Activated CD8-positive, alpha-beta T cell treated with anti-CD3 and anti-CD28 coated beads, Interleukin-2, amount 10 ng/mL, durations not matched to agents 7 days and 5 days (primary cell): ENCODE measurements at regions of chr9 and their contacts with region 1.

Region 1: DNA sequence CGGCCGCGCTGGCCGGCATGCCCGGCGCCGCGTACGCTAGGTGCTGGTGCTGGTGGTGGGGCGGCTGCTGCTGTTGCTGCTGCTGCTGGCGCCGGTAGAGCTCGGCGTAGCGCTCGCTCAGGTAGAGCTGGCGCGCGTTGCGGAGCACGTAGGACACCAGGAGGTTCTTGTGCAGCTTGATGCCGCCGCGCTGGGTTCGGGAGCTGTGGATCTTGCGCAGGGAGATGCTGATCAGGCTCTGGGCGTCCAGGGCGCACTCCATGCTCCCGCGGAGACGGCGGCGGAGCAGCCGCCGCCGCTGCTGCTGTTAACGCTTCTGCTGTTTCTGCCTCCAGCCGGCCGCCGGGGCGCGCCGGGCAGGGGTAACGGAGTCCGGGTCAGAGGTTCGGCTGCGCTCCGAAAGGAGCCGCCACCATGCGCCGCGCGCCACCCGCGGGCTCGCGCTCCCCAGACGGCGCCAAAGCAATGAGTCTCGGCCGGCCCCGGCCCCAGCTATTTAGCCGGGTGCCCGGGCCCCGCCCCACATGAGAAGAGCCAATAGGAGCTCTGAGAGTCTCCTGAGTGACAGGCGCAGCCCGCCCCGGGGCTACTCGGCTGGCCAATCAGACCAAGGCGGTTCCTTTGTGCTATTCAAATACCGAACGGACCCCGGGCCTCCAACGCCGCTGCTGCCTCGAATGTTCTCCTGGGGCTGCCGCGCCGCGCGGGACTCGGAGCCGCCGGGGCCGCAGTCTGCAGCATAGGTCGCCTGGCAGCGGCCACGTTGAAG is at the start of gene IER5L:
- DNase-seq: peak; percentile 95
- ATAC-seq: peak; percentile 83
- H3K4me3 Mint-ChIP-seq: peak within 1 kb of the TSS; percentile 92
- H3K27ac Mint-ChIP-seq: peak within 1 kb of the TSS; percentile 80
- H3K4me1 Mint-ChIP-seq: peaks cover 17% of the 10 kb centered on the region
- H3K27me3 Mint-ChIP-seq: peaks cover 6% of the 10 kb centered on the region
- total RNA-seq, gene IER5L: 6.0 to 6.1 TPM

Region 2: GRCh38 chr9:129131300-129132145 is 46.5 kb before region 1 on chr9:
- CTCF ChIA-PET with region 1: interaction called, 43 read pairs
- POLR2A ChIA-PET with region 1: interaction called, 5 read pairs
- DNase-seq: peak; percentile 89
- ATAC-seq: peak; percentile 97
- H3K4me3 Mint-ChIP-seq: no peak overlapping the region
- H3K27ac Mint-ChIP-seq: no peak overlapping the region
- H3K4me1 Mint-ChIP-seq: peaks cover 7% of the 10 kb centered on the region
- H3K27me3 Mint-ChIP-seq: no peaks in the 10 kb centered on the region

Region 3: DNA sequence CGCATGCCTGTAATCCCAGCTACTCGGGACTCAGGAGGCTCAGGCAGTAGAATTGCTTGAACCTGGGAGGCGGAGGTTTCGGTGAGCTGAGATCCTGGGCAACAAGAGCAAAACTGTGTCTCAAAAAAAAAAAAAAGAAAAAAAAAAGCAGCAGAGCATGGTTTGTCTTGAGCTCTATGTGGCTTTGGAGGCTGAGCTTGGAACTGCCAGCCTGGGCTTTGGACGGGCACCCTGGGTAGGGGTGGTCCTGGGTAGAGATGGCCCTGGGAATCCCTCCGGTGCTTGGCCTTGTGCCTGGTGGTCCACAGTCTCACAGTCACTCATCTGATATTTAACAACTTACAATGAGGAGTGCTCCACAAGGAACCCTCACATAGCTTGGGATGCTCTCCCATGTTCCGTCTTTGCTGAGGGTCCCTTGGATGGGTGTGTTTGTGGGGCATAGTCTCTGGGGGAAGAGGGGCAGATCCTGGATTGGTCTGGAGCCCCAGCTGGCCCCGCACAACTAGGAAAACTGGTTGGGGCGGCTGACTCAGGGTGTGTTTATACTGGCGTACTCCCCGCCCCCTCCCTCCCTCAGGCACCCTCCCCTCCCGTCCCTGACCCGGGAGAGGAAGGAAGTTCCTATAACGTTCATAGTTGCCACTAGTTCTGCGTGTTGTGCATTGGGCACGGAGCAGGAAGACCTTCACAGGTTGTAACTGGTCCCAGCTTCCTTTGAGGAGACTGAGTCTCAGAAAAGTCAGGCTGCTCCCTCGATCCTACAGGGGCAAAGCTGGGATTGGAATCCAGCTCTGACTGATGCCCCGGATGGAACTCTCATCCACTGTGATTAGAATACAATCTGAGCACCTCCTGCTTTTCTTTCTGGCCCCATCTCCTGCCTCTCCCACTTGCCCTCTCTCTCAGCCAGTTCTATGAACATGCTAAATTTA is 11.1 kb before region 1 on chr9:
- CTCF ChIA-PET with region 1: interaction called, 18 read pairs
- POLR2A ChIA-PET with region 1: interaction called, 9 read pairs
- DNase-seq: peak; percentile 35
- ATAC-seq: peak; percentile 55
- H3K4me3 Mint-ChIP-seq: peak overlapping the region; percentile 56
- H3K27ac Mint-ChIP-seq: peak overlapping the region; percentile 55
- H3K4me1 Mint-ChIP-seq: peaks cover 39% of the 10 kb centered on the region
- H3K27me3 Mint-ChIP-seq: peaks cover 1% of the 10 kb centered on the region

Region 4: GRCh38 chr9:129347316-129348120 is 169.5 kb after region 1 on chr9:
- CTCF ChIA-PET with region 1: interaction called, 20 read pairs
- POLR2A ChIA-PET with region 1: no interaction called
- DNase-seq: no peak
- ATAC-seq: no peak
- H3K4me3 Mint-ChIP-seq: no peak overlapping the region
- H3K27ac Mint-ChIP-seq: no peak overlapping the region
- H3K4me1 Mint-ChIP-seq: peaks cover 16% of the 10 kb centered on the region
- H3K27me3 Mint-ChIP-seq: peaks cover 7% of the 10 kb centered on the region

Region 5: DNA sequence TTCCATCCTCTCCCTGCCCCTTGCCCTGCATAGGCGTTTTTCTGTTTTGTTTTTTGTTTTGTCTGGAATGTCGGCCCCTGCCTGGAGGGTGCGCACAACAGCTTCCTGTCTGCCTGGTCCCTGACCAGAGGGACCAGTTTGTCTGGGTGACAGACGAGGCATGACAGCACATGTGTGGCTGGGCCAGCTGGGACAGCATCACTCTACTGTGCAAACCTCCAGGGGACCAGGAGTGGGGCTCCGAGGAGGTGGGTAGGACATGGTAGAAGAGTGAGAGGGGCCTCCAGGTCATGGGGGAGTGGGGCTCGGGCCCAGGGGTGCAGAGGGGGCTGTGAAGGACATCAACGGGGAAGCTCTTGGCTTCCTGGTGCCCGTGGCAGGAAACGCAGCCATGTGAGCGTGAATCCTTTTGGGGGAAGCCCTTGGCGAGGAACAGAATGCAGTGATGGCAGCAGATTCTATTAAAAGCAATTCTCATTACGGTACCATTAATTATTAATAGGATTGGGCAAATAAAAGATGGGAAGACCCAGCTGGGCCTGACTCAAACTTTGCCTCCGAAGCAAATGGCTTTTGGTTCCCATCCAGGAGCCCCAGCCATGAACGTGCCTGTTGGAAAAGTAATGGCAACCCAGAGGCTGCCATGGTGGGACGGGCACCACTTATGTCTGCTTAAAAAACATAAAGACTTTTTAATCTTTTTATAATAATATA is 184.5 kb after region 1 on chr9:
- CTCF ChIA-PET with region 1: no interaction called
- POLR2A ChIA-PET with region 1: no interaction called
- DNase-seq: no peak
- ATAC-seq: no peak
- H3K4me3 Mint-ChIP-seq: no peak overlapping the region
- H3K27ac Mint-ChIP-seq: no peak overlapping the region
- H3K4me1 Mint-ChIP-seq: no peaks in the 10 kb centered on the region
- H3K27me3 Mint-ChIP-seq: peaks cover 3% of the 10 kb centered on the region

Region 6: DNA sequence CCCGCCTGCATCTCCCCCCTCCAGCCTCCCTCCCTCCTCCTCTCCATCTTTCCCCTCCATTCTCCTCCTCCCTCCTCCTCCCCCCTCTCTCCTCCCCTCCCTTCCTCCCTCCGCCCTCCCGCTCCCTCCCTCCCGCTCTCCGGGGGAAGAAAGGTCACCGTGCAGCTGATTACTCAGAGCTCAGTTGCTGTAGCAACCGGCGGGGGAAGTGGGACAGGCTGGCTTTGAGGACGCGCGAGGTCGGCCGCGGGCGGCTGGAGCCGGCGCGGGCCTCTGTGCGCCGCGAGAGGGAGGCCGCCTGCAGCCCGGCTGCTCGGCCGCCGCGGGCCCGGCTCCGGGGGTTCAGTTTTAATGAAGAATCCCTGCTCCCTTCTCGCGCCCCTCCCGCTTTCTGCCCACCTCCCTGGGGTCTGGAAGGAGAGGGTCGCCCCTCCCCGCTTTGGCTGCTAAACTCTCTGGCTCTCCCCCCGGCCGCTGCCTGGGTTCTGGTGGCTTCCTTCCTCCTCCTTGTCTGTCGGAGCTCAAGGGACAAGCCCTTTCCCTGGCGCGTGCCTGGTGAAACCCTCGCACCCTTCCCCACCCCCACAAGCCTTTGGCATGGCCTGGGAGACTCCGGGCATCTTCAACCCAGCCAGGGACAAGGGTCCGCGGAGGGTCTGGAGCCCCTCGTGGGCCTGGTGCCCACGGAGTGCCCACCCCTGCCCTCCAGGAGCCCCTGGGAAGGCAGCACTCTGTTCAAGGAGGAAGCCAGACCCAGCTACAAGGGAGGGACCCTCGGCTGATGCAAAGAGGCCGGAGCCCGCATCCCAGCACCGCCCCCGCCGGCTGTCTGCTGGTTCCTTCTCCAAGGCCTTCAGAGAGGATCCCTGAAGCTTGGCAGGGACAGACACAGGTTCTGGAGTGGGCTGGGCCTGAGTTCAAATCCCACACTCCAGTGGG is 282.6 kb after region 1 on chr9:
- CTCF ChIA-PET with region 1: interaction called, 22 read pairs
- POLR2A ChIA-PET with region 1: interaction called, 11 read pairs
- DNase-seq: peak; percentile 94
- ATAC-seq: peak; percentile 82
- H3K4me3 Mint-ChIP-seq: peak overlapping the region; percentile 68
- H3K27ac Mint-ChIP-seq: peak overlapping the region; percentile 88
- H3K4me1 Mint-ChIP-seq: peaks cover 40% of the 10 kb centered on the region
- H3K27me3 Mint-ChIP-seq: peaks cover 14% of the 10 kb centered on the region

Region 7: DNA sequence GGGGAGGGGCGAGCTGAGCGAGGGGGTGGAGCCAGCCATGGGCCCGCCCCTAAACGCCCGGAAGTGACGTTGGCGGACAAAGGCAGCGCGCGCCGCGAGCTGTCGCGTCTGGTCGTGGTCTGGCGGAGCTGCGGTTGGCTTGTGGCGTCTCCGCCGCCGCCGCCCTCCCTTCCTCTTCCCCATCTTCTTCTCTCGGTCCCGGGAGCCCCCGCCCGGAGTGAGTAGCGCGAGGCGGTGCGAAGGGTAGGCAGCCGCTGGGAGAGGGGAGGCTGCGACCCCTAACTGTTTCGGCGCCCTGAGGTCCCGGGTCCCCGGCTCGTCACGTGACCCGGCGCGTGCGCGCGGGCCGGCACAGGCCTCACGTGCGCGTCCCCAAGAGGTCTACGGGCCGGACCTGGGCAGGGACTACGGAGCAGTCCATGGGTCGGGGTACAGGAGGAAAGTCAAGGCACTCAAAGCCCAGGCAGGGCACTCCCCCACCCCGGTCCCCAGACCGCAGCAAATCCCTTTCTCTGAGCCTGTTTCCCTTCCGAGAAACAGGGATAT is 448.2 kb after region 1 on chr9 and contains the start of gene NTMT1:
- CTCF ChIA-PET with region 1: interaction called, 39 read pairs
- POLR2A ChIA-PET with region 1: interaction called, 8 read pairs
- DNase-seq: peak; percentile 92
- ATAC-seq: peak; percentile 70
- H3K4me3 Mint-ChIP-seq: peak within 1 kb of the TSS; percentile 80
- H3K27ac Mint-ChIP-seq: peak within 1 kb of the TSS; percentile 88
- H3K4me1 Mint-ChIP-seq: peaks cover 54% of the 10 kb centered on the region
- H3K27me3 Mint-ChIP-seq: peaks cover 5% of the 10 kb centered on the region
- total RNA-seq, gene NTMT1: 36.2 to 39.2 TPM